Mammary epithelial cell (primary cell): ENCODE measurements at regions of chr4 and their contacts with region 1.

Region 1: GRCh38 chr4:3212786-3213425 is 36.1 kb upstream of the MSANTD1 start:
- DNase-seq: no peak
- H3K4me3 ChIP-seq: no peak overlapping the region
- H3K27ac ChIP-seq: no peak overlapping the region
- H3K4me1 ChIP-seq: no peaks in the 10 kb centered on the region
- H3K27me3 ChIP-seq: no peaks in the 10 kb centered on the region
- CTCF ChIP-seq: no peak

Region 2: GRCh38 chr4:3136453-3136852 is 76.5 kb before region 1 on chr4:
- CTCF ChIA-PET with region 1: no interaction called
- dilution Hi-C with region 1: no loop called
- in situ Hi-C with region 1: no loop called
- intact Hi-C with region 1: no loop called
- DNase-seq: no peak
- H3K4me3 ChIP-seq: no peak overlapping the region
- H3K27ac ChIP-seq: no peak overlapping the region
- H3K4me1 ChIP-seq: no peaks in the 10 kb centered on the region
- H3K27me3 ChIP-seq: no peaks in the 10 kb centered on the region
- CTCF ChIP-seq: peak; percentile 9 to 26

Region 3: DNA sequence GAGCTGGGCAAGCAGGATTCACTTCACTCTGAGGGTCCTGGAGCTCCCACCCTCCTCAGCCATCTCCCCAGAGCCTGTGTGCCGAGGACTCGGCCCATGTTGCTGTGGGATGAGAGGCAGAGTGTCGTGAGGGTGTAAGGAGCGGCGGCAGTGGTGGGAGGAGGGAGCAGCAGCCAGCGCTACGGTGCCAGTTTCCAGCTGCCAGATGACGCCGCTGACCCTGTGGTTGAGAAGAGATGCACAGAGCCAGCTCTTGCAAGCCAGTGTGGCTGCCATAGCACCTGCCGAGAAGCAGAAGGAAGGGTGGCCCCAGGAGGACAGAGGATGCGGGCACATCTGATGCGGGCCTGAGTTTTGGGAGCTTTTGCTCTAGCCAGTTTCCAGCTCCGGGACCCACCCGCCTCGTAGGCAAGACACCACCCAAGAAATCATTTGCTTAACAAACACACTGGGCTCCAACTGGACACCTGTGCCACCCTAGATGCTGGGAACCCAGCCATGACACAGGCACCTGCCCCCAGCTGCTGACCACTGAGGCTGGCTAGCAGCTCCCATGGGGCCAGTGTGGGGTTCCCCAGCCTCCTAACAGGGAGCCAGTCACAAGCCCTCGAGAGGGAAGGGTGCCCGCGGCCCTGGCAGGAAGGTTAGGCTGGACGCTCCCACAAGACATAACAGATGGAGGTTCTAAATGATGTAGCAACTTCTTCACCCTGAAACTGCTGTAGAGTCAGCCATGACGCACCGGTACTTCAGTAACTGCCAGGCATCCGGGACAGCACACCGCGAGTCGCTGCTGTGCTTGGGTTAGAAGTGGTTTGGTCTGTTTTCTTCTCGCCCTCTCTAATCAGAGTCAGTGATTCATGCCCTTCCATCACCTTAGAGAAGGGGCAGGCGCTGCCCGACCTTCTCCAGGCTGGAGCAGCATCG is 44.9 kb after region 1 on chr4:
- CTCF ChIA-PET with region 1: no interaction called
- dilution Hi-C with region 1: loop called (anchors 5 kb)
- in situ Hi-C with region 1: no loop called
- intact Hi-C with region 1: no loop called
- DNase-seq: peak; percentile 46
- H3K4me3 ChIP-seq: no peak overlapping the region
- H3K27ac ChIP-seq: no peak overlapping the region
- H3K4me1 ChIP-seq: no peaks in the 10 kb centered on the region
- H3K27me3 ChIP-seq: no peaks in the 10 kb centered on the region
- CTCF ChIP-seq: no peak